ENCODE measurements at regions of chr3 and their contacts with region 1.

Region 1: GRCh38 chr3:64030741-64031140 is 7.4 kb upstream of the PSMD6 start:
- ATAC-seq: peak; percentile 81 to 98 (median 88)
- H3K4me3 ChIP-seq: no peak overlapping the region
- H3K27ac ChIP-seq: no peak overlapping the region
- H3K4me1 ChIP-seq: peaks cover 31 to 36% of the 10 kb centered on the region in 2 donors

Region 2: DNA sequence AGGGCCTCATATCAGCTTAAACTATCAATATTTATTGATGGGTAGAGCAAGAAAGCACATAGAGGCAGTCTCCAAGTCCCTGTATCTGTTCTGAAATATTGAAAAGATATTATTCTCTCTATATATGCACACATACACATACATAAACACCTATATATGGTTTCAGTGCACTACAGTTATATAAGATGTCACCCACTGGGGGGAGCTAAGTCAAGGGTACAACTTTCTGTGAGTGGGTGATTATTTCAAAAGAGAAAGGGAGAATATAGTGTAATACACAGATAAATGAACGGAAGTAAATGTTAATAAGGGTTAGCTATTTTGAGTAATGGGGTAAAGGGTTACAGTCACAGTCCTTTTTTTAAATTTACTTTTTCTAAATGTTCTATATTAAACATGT is 369.5 kb before region 1 on chr3:
- in situ Hi-C with region 1: no loop called
- ATAC-seq: no peak
- H3K4me3 ChIP-seq: no peak overlapping the region
- H3K27ac ChIP-seq: no peak overlapping the region
- H3K4me1 ChIP-seq: peaks cover 0 to 6% of the 10 kb centered on the region in 2 donors

Region 3: GRCh38 chr3:64150623-64151207 is 120.0 kb after region 1 on chr3:
- in situ Hi-C with region 1: loop called in 1 of 9 experiments (anchors 25 kb)
- ATAC-seq: peak; percentile 83 to 99 (median 98)
- H3K4me3 ChIP-seq: no peak overlapping the region
- H3K27ac ChIP-seq: peak overlapping the region in 1 of 2 donors; percentile 24
- H3K4me1 ChIP-seq: peaks cover 10 to 13% of the 10 kb centered on the region in 2 donors

Region 4: GRCh38 chr3:64187065-64187959 is 156.6 kb after region 1 on chr3:
- in situ Hi-C with region 1: loop called in 1 of 9 experiments (anchors 25 kb)
- ATAC-seq: peak; percentile 59 to 93 (median 90)
- H3K4me3 ChIP-seq: peak overlapping the region in 2 of 5 donors; percentile 22 to 29
- H3K27ac ChIP-seq: peak overlapping the region; percentile 86 to 90
- H3K4me1 ChIP-seq: peaks cover 34 to 36% of the 10 kb centered on the region in 2 donors

Region 5: DNA sequence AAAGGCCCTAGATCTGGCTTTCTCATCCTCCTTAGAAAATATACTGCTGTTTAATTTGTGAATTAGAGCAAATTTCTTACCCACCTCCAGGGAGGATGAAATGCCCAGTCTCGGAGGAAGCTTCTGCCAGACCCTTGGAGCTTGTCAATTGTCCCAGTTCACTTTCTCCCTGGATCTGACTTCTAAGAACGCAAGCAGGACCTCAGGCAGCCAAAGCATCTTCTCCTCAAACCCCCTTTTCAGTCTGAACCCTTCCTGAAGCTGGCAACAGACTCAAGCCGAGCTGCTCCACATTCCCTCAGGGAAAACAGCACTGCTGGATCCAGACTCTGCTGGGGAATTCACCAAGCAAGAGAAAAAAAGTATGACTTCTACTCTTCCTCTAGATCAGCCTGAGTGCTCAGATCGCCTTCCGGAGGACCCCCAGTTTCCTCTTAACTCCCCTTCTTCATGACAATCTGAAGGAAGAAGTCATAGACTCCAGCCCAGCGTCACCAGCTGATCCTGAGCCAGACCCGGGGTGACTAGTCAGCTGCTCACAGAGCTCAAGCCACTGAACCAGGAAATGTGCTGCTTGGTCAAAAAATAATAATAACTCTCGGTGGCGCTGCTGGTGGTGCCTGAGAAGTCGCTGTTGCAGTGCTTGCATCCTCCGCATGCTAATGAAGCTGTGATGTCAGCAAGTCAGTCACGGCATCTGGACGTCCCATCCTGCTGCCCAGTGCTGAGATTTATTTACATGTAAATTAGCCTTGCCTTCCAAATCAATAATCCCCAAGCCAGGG is 194.3 kb after region 1 on chr3 and contains the start of gene PRICKLE2:
- in situ Hi-C with region 1: loop called in 2 of 9 experiments (anchors 25 kb)
- ATAC-seq: peak; percentile 87 to 96 (median 94)
- H3K4me3 ChIP-seq: peak within 1 kb of the TSS; percentile 35 to 44 (median 38)
- H3K27ac ChIP-seq: peak within 1 kb of the TSS; percentile 58 to 73
- H3K4me1 ChIP-seq: peaks cover 43 to 46% of the 10 kb centered on the region in 2 donors
- total RNA-seq, gene PRICKLE2: 2.1 to 43.1 (median 12.0) TPM

Region 6: GRCh38 chr3:64238971-64239667 is 208.4 kb after region 1 on chr3:
- in situ Hi-C with region 1: no loop called
- ATAC-seq: peak; percentile 86 to 99 (median 98)
- H3K4me3 ChIP-seq: no peak overlapping the region
- H3K27ac ChIP-seq: peak overlapping the region; percentile 66 to 73
- H3K4me1 ChIP-seq: peaks cover 10 to 15% of the 10 kb centered on the region in 2 donors

Region 7: DNA sequence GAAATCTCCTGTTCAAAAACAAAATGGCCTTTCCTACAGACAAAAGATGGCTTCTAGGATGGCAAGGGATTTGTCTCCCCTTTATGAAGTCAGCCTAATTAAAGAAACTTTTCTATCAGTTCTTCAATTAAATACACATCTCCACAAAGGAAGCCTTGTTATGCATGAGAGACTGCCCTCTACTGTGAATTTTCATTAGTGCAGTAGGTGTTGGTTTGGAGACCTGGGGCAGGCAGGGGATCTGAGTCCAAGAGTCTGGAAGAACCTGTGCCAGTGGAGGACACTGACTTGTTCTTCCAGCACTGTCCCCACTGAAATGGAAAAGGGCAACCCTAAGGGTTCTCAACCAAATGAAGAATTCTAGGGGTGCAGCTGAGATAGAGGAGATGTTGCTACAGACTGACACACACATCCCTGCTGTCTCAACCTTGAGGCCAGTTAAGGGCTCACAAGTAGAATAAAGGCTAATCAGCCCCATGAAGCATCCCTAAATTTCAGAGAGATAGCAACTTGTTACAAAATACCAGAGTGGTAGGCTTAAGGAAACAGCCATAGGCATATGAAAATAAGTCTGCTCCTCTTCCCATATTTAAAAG is 368.6 kb after region 1 on chr3:
- in situ Hi-C with region 1: loop called in 4 of 9 experiments (anchors 10 to 25 kb)
- ATAC-seq: peak in 4 of 8 experiments; percentile 58 to 80 (median 74)
- H3K4me3 ChIP-seq: no peak overlapping the region
- H3K27ac ChIP-seq: no peak overlapping the region
- H3K4me1 ChIP-seq: peaks cover 17 to 30% of the 10 kb centered on the region in 2 donors

Region 8: GRCh38 chr3:64462203-64462602 is 431.5 kb after region 1 on chr3:
- in situ Hi-C with region 1: loop called in 3 of 9 experiments (anchors 10 to 25 kb)
- ATAC-seq: no peak
- H3K4me3 ChIP-seq: no peak overlapping the region
- H3K27ac ChIP-seq: no peak overlapping the region
- H3K4me1 ChIP-seq: peaks cover 16 to 41% of the 10 kb centered on the region in 2 donors

Region 9: DNA sequence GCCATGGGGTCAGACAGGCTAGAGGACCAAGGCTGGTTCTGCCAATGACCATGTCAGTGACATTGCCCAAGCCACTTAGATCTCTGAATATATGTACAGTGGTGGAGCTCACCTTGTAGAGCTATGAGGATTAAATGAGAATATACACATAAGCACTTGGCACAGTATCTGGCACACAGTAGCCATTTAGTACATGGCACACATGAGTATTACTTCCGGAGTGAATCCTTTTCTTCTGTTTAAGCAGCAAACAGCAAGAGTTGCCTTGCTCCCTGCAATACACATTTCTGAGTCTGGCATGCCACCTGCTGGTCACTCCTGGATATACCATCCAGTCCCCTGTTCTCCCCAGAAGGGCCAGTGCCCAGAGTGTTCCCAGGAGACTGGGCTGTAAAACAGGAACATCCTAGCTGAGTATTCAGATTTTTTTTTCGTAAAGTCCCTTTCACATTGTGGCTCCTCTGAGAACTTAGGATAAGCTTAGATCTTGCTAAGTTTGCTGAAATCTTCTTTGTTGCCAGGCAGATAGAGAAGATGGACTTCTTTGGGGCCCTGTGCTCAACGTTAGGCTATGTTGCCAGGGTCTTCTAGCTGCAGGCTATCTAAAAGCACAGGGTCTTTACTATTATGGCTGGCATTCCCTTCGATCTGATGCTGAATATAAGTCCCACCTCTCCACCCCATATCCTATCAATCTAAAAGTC is 453.7 kb after region 1 on chr3:
- in situ Hi-C with region 1: loop called in 7 of 9 experiments (anchors 5 to 25 kb)
- ATAC-seq: peak; percentile 65 to 93 (median 76)
- H3K4me3 ChIP-seq: no peak overlapping the region
- H3K27ac ChIP-seq: no peak overlapping the region
- H3K4me1 ChIP-seq: peaks cover 7 to 16% of the 10 kb centered on the region in 2 donors

Measured in motor neuron (in vitro differentiated cells).